ENCODE measurements at regions of chr11 and their contacts with region 1.

Region 1: GRCh38 chr11:117232092-117232878 is at the start of gene RNF214:
- DNase-seq: peak; percentile 87
- ATAC-seq: peak; percentile 73
- H3K4me3 Mint-ChIP-seq: peak within 1 kb of the TSS; percentile 100
- H3K27ac Mint-ChIP-seq: peak within 1 kb of the TSS; percentile 100
- H3K4me1 Mint-ChIP-seq: peaks cover 36% of the 10 kb centered on the region
- H3K27me3 Mint-ChIP-seq: no peaks in the 10 kb centered on the region
- total RNA-seq, gene RNF214: 22.6 to 26.0 TPM

Region 2: GRCh38 chr11:117160826-117161225 is 71.5 kb before region 1 on chr11:
- POLR2A ChIA-PET with region 1: no interaction called
- DNase-seq: no peak
- ATAC-seq: no peak
- H3K4me3 Mint-ChIP-seq: no peak overlapping the region
- H3K27ac Mint-ChIP-seq: no peak overlapping the region
- H3K4me1 Mint-ChIP-seq: peaks cover 6% of the 10 kb centered on the region
- H3K27me3 Mint-ChIP-seq: no peaks in the 10 kb centered on the region

Region 3: GRCh38 chr11:117178210-117179034 is 53.9 kb before region 1 on chr11 and contains the start of gene SIDT2:
- POLR2A ChIA-PET with region 1: interaction called, 16 read pairs
- DNase-seq: peak; percentile 87
- ATAC-seq: peak; percentile 97
- H3K4me3 Mint-ChIP-seq: peak within 1 kb of the TSS; percentile 93
- H3K27ac Mint-ChIP-seq: peak within 1 kb of the TSS; percentile 90
- H3K4me1 Mint-ChIP-seq: peaks cover 23% of the 10 kb centered on the region
- H3K27me3 Mint-ChIP-seq: no peaks in the 10 kb centered on the region
- total RNA-seq, gene SIDT2: 34.9 to 35.0 TPM